WTC11 (cell line): ENCODE measurements at regions of chr7 and their contacts with region 1.

Region 1: DNA sequence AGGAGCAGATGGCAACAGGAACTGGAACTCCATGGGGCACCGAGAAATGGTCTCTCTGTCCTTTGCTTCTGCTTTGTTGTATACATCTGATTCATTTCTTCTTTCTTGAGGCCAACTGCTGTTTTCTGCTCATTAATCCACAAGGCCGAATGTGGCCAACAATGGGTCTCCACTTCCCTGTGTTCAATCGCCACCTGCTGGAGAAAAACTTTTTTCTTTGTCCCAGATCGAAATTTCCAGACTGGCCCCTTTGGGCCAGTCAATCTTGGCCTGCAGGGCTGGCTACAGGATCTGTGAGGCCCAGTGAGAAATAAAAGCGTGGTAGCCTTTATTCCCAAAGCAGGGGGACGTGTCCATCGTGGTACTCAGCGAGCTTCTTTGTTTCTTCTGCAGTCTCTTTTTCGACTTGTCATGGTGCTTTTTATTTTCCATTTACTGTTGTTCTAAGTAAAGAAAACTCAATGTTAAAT is 58.8 kb downstream of the PARP12 start:
- DNase-seq: peak; percentile 49
- ATAC-seq: peak; percentile 46
- H3K4me3 Mint-ChIP-seq: no peak overlapping the region
- H3K27ac Mint-ChIP-seq: peak overlapping the region; percentile 91
- H3K4me1 Mint-ChIP-seq: peaks cover 16% of the 10 kb centered on the region
- H3K27me3 Mint-ChIP-seq: no peaks in the 10 kb centered on the region
- CTCF ChIP-seq: peak; percentile 46; the same call in 1 of the 2 replicates

Region 2: DNA sequence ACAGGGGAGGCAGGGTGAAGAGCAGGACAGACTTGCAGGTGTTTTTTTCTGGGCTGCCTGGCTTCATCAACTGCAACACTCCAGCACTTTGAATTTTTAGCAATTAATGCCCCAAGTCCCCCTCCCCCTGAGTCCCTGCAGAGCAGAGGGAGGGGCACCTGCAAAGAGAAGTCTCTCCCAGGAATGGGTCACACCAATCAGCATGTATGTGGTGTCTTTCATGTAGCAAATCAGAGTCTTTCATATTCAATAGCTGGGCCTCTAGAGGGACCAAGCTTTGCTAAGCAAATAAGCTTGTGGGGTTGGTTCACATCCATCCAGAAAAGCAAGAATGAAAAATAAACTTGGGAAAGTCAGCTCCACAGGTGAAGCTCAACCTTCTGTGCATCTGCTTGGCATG is 31.9 kb before region 1 on chr7:
- CTCF ChIA-PET with region 1: interaction called, 10 read pairs
- POLR2A ChIA-PET with region 1: no interaction called
- DNase-seq: no peak
- ATAC-seq: peak; percentile 87
- H3K4me3 Mint-ChIP-seq: peak overlapping the region; percentile 17
- H3K27ac Mint-ChIP-seq: 0 out of 2 replicates have a peak overlapping the region, but pooled peaks have one; percentile 19
- H3K4me1 Mint-ChIP-seq: peaks cover 75% of the 10 kb centered on the region
- H3K27me3 Mint-ChIP-seq: peaks cover 26% of the 10 kb centered on the region
- CTCF ChIP-seq: no peak

Region 3: DNA sequence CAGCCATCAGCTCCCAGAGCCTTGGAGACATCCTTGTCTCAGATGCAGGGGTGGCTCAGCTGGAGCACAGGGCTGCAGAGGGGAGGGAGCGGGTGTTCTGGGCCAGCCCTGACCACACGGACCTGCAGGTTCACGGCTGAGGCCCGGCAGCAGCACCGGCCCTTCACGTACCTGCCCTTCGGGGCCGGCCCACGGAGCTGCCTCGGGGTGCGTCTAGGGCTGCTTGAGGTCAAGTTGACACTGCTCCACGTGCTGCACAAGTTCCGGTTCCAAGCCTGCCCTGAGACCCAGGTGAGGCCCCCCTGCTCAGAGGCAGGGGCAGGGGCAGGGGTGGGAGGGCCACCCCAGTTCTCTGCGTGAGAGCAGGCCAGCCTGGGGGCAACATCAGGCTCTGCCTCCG is 13.6 kb after region 1 on chr7:
- CTCF ChIA-PET with region 1: interaction called, 12 read pairs
- POLR2A ChIA-PET with region 1: no interaction called
- DNase-seq: no peak
- ATAC-seq: peak; percentile 14
- H3K4me3 Mint-ChIP-seq: no peak overlapping the region
- H3K27ac Mint-ChIP-seq: no peak overlapping the region
- H3K4me1 Mint-ChIP-seq: 0 out of 2 replicates have a peak, but pooled peaks cover 3% of the 10 kb centered on the region
- H3K27me3 Mint-ChIP-seq: no peaks in the 10 kb centered on the region
- CTCF ChIP-seq: no peak